ENCODE measurements at regions of chrX and their contacts with region 1.

Region 1: DNA sequence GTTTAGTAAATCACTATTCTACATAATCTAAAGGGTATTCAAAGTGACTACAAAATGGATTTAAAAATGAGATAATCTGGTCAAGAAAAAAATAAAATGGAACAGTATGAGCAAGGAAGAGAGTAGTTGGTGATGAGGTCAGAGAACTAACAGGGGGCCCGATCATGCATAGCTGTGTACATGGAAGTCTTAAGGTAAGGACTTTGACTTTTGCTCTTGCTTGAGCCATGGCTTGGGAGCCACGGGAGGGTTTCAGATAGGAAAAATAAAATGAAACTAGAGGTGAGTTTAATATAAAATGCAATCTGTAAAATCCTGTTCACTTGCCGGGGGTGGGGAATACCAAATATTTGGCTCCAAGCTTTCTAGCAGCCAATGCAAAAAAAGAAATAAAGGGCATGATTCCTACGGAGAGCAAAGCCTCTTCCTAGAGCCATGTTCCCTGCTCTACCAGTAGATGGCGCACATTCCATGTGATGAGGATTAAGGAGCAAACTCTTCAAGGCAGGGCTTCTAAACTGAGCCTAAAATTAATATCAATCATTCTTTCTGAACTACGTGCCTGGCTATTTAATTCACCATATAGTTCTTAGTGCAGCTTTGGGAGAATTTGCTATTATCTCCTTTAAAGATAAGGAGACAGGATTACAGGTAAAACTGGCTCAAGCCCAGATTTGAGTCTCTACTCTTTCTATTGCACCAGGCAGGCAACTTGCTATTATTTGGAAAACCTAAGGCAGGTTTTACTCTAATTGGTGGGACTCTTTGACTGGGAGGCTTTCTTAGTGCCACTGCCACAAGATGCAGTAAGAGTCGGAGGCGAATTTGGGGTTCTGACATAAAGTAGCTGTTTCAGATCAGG is 6.8 kb upstream of the CLCN5 start:
- DNase-seq: peak; percentile 39
- H3K4me3 Mint-ChIP-seq: no peak overlapping the region
- H3K27ac Mint-ChIP-seq: no peak overlapping the region
- H3K4me1 Mint-ChIP-seq: peaks cover under 1% of the 10 kb centered on the region
- H3K27me3 Mint-ChIP-seq: no peaks in the 10 kb centered on the region

Region 2: GRCh38 chrX:50081282-50081889 is 165.8 kb after region 1 on chrX:
- CTCF ChIA-PET with region 1: no interaction called
- POLR2A ChIA-PET with region 1: no interaction called
- intact Hi-C with region 1: loop called (anchors 5 kb)
- DNase-seq: peak; percentile 17
- H3K4me3 Mint-ChIP-seq: no peak overlapping the region
- H3K27ac Mint-ChIP-seq: no peak overlapping the region
- H3K4me1 Mint-ChIP-seq: no peaks in the 10 kb centered on the region
- H3K27me3 Mint-ChIP-seq: no peaks in the 10 kb centered on the region

Measured in activated CD4-positive, alpha-beta memory T cell treated with anti-CD3 and anti-CD28 coated beads for 36 hours (primary cell).